IMR-90 (cell line): ENCODE measurements at regions of chr7 and their contacts with region 1.

Region 1: DNA sequence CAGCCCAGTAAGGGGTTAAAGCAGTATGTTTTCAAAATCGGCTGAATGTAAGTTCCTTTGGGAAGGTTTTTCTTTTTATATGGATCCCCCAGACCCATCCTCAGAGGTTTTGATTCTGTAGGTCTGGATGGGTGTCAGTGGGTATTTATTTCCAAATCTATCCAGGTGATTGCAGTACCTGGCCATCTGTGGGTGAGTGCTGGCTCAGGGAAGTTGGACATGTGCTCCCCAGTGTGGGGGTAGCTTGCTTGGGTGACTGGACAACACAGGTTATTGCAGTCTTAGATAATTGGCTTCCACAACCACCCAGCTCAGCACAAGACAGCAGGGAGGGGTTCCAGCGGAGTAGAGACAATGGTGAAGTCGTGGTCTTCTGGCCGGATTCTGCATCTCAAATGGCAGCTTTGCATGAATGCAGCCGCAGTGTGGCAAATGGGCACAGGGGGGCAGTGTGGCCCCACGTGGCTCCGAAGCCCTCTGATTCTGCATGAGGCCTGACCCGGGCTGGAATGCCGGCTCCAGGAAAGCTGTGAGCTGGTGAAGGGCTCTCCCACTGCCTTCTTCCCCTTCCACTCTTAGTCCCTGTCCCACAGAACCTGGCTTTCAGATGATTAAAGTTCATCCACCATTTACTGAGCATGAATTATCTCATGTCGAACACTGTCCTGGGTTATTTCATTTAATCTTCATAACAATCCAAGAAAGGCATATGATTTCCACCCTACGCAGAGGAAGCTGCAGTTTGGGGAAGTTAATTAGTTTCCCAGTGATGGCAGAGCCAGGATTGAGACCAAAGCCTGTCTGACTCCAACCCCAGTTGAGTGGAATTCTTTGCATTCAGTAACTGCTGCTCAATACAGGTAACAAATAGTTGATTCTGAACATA is 64.5 kb upstream of the SYPL1 start:
- DNase-seq: peak; percentile 69
- ATAC-seq: peak; percentile 96
- H3K4me3 ChIP-seq: no peak overlapping the region
- H3K27ac ChIP-seq: no peak overlapping the region
- H3K4me1 ChIP-seq: peaks cover 5% of the 10 kb centered on the region; the same call in 1 of the 2 replicates
- H3K27me3 ChIP-seq: peaks cover 1% of the 10 kb centered on the region; the same call in 1 of the 2 replicates
- CTCF ChIP-seq: peak; percentile 98
- POLR2A ChIP-seq: peak; percentile 64
- RAD21 ChIP-seq: peak; percentile 99

Region 2: DNA sequence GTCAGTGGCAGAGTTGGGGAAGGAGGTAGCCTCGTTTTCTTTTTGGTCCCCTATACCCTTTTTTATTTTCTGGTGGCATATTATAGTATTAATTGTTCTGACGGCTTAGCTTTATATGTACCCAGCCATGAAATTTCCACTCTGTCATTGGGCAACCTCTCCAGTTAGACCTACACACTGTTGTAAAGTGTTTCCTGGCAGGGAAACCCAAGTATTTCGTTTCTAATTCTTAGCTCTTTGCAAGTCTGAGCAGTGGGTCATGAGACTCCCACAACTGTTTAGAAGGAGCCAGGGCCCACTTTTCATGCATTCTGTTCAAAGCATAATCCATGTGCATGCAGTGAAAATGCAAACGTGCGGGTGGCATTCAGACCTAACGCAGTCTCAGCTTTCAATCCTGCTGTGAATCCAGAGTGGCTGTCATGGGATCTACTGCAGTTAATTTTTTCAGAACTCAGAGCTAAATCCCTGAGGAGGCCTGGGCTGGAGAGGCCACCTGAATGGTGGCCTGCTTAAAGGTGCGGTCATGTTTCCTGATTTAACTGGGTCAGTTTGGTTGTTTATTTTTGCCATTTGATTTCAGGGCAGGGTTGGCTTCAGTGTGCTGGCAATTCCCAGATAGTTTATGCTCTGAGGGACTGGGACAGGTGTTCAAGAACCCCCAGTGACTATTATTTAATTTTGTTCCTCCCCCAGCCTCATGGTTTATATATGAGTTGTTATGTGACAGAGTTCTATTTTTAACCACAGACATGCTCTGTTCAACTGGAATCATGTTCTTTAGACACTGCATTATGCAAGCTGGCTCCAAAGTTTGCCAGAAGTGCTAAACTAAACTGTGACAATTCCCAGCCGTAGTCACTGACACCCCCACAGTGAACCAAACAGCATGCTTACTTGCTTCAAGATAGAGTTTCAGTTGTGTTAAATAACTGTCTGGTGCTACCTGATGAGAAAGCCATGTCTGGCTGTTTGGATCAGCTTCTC is 37.1 kb before region 1 on chr7:
- CTCF ChIA-PET with region 1: no interaction called
- POLR2A ChIA-PET with region 1: no interaction called
- dilution Hi-C with region 1: no loop called
- in situ Hi-C with region 1: no loop called
- intact Hi-C with region 1: no loop called
- DNase-seq: peak; percentile 52
- ATAC-seq: peak; percentile 53; the same call in 1 of the 2 replicates
- H3K4me3 ChIP-seq: no peak overlapping the region
- H3K27ac ChIP-seq: no peak overlapping the region
- H3K4me1 ChIP-seq: peaks cover 3% of the 10 kb centered on the region; the same call in 1 of the 2 replicates
- H3K27me3 ChIP-seq: peaks cover 30% of the 10 kb centered on the region
- CTCF ChIP-seq: no peak
- POLR2A ChIP-seq: no peak
- RAD21 ChIP-seq: no peak

Region 3: DNA sequence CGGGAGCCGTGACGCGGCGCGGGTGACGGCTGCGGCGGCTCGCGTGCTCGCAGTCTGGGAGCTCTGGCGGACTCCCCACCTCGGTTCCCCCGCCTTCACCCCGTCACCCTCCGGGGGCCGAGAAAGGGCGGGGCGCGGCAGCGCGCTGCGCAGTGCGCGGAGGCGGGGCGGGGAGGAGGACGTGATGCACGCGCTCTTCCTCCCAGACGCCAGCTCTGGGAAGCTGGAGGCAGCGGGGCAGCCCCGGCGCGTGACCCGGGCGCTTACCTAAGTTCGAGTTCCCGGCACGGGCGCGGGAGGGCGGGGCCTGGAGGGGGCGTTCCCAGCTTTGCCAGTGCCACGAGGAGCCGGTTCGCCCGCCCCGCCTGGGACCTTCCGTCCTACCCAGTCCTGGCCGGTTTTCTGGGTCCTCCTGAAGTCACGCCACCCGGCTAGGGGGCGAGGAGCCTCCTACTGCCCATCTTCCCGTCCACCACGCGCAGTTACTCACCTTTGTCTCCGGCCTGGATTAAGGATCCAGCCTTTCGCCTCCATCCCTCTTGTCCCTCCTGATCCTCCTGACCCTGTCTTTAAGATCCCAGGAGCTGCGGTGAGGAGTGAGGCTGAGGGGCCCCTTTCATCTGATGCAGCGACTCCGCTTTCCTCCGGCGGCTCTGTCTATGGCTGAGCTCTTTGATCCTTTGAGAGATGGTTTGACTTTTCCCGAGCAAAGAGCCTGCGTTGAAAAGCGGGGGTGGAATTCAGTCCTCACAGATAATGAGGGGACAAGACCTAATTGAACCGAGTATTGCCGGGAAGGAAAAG is 108.6 kb after region 1 on chr7:
- CTCF ChIA-PET with region 1: no interaction called
- POLR2A ChIA-PET with region 1: no interaction called
- dilution Hi-C with region 1: no loop called
- in situ Hi-C with region 1: no loop called
- intact Hi-C with region 1: loop called (anchors 2 kb)
- DNase-seq: peak; percentile 97
- ATAC-seq: peak; percentile 96
- H3K4me3 ChIP-seq: peak overlapping the region; percentile 96
- H3K27ac ChIP-seq: peak overlapping the region; percentile 97
- H3K4me1 ChIP-seq: peaks cover 2% of the 10 kb centered on the region; the same call in 1 of the 2 replicates
- H3K27me3 ChIP-seq: no peaks in the 10 kb centered on the region
- CTCF ChIP-seq: no peak
- POLR2A ChIP-seq: peak; percentile 80
- RAD21 ChIP-seq: no peak

Region 4: GRCh38 chr7:106461993-106462859 is 285.6 kb after region 1 on chr7:
- CTCF ChIA-PET with region 1: interaction called, 34 read pairs
- POLR2A ChIA-PET with region 1: interaction called, 6 read pairs
- dilution Hi-C with region 1: no loop called
- in situ Hi-C with region 1: loop called (anchors 5 kb)
- intact Hi-C with region 1: loop called (anchors 1 kb)
- DNase-seq: peak; percentile 52
- ATAC-seq: peak; percentile 64
- H3K4me3 ChIP-seq: no peak overlapping the region
- H3K27ac ChIP-seq: no peak overlapping the region
- H3K4me1 ChIP-seq: no peaks in the 10 kb centered on the region
- H3K27me3 ChIP-seq: no peaks in the 10 kb centered on the region
- CTCF ChIP-seq: peak; percentile 60
- POLR2A ChIP-seq: no peak
- RAD21 ChIP-seq: peak; percentile 61

Region 5: DNA sequence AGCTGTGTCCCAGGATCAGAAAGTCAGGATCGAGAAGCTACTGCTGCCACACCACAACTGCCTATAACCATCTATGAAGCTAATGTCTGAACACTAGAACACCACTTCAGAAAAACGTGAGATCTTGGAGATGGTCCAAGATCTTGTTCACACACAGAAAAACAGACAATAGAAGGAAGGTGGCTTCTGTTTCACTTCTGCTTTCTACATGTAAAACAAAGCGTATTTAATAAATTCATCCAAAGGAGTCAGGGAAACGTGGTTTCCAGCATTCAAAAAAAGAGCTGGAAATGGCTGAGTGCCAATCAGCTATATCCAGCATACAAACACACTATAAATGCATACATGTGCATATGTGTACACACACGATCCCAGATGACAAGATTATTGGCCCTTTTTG is 554.5 kb after region 1 on chr7:
- CTCF ChIA-PET with region 1: interaction called, 19 read pairs
- POLR2A ChIA-PET with region 1: interaction called, 3 read pairs
- dilution Hi-C with region 1: no loop called
- in situ Hi-C with region 1: loop called (anchors 5 kb)
- intact Hi-C with region 1: loop called (anchors 1 kb)
- DNase-seq: no peak
- ATAC-seq: no peak
- H3K4me3 ChIP-seq: no peak overlapping the region
- H3K27ac ChIP-seq: no peak overlapping the region
- H3K4me1 ChIP-seq: peaks cover 3% of the 10 kb centered on the region; the same call in 1 of the 2 replicates
- H3K27me3 ChIP-seq: no peaks in the 10 kb centered on the region
- CTCF ChIP-seq: no peak
- POLR2A ChIP-seq: no peak
- RAD21 ChIP-seq: no peak

Region 6: DNA sequence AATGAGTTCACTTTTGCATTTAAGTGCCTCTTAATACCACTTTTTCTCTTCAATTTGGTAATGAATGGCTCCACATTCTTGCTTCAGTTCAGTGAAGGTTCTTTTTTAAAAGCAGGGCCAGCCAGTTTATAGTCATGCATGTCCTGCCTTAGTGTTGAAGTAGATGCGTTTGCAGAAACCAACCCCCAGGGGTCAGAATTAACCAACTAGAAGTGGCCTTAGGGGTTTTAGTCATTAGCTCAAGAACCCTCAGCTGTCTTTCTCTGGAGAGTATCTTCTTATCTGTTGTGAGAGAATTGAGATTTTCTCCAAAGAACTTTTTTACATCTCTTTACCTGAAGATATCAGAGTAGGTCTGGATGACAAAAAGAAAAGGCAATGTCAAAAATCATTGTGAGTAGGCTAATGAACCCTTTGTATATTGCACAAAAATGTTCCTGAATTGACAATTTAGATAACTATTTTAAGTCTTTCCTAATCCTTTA is 770.6 kb after region 1 on chr7:
- CTCF ChIA-PET with region 1: no interaction called
- POLR2A ChIA-PET with region 1: no interaction called
- dilution Hi-C with region 1: no loop called
- in situ Hi-C with region 1: no loop called
- intact Hi-C with region 1: loop called (anchors 5 kb)
- DNase-seq: peak; percentile 83
- ATAC-seq: peak; percentile 100
- H3K4me3 ChIP-seq: no peak overlapping the region
- H3K27ac ChIP-seq: no peak overlapping the region
- H3K4me1 ChIP-seq: no peaks in the 10 kb centered on the region; the same call in 1 of the 2 replicates
- H3K27me3 ChIP-seq: peaks cover 8% of the 10 kb centered on the region; the same call in 1 of the 2 replicates
- CTCF ChIP-seq: peak; percentile 86
- POLR2A ChIP-seq: no peak
- RAD21 ChIP-seq: peak; percentile 83

Region 7: GRCh38 chr7:107150375-107151073 is 973.9 kb after region 1 on chr7:
- CTCF ChIA-PET with region 1: no interaction called
- POLR2A ChIA-PET with region 1: no interaction called
- dilution Hi-C with region 1: no loop called
- in situ Hi-C with region 1: loop called (anchors 10 kb)
- intact Hi-C with region 1: loop called (anchors 5 kb)
- DNase-seq: peak; percentile 78
- ATAC-seq: peak; percentile 58; the same call in 1 of the 2 replicates
- H3K4me3 ChIP-seq: no peak overlapping the region
- H3K27ac ChIP-seq: no peak overlapping the region
- H3K4me1 ChIP-seq: peaks cover 6% of the 10 kb centered on the region
- H3K27me3 ChIP-seq: no peaks in the 10 kb centered on the region
- CTCF ChIP-seq: peak; percentile 74
- POLR2A ChIP-seq: no peak
- RAD21 ChIP-seq: peak; percentile 75